ENCODE measurements at regions of chr9 and their contacts with region 1.

Region 1: GRCh38 chr9:126009047-126009446 is 261.9 kb downstream of the PBX3 start:
- DNase-seq: no peak
- H3K4me3 ChIP-seq: no peak overlapping the region
- H3K27ac ChIP-seq: no peak overlapping the region
- H3K27me3 ChIP-seq: peaks cover 0 to 8% (median 0%) of the 10 kb centered on the region in 45 donors
- CTCF ChIP-seq: no peak

Region 2: GRCh38 chr9:125988479-125989050 is 20.5 kb before region 1 on chr9:
- intact Hi-C with region 1: loop called in 1 of 2 experiments (anchors 1 kb)
- DNase-seq: peak in 4 of 10 donors; percentile 11 to 31 (median 25)
- H3K4me3 ChIP-seq: no peak overlapping the region
- H3K27ac ChIP-seq: no peak overlapping the region
- H3K27me3 ChIP-seq: no peaks in the 10 kb centered on the region
- CTCF ChIP-seq: no peak

Region 3: DNA sequence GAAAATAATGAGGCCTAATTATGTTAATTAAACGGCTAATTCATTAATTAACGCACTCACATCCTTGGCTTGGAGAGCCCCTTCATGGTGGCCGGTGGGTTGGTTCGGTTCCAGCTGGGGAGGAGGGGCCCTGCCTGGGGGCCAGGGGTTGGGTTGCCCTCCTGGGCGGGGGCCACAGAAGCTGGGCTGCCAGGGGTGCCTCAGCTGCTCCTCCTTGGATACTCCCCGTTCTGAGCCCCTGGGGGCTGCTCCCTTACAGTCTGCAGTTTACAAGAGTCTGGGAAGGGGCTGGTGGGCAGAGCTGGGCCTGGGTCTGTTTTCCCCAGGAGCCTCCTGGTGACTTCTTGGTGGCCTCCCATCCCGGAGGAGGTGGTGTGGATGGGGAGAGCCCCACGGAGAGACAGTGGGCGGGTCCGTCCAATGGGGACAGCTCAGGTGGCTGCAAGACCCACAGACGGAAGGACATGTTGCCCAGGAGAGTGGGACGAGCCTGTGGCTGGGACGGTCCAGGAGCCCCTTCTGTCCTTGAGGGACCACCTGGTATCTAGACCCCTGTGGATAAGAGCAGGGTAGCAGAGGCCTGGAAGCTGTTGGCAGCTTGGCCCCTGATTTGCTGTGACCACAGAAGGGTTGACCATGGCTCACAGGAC is 15.7 kb after region 1 on chr9:
- intact Hi-C with region 1: no loop called
- DNase-seq: no peak
- H3K4me3 ChIP-seq: no peak overlapping the region
- H3K27ac ChIP-seq: no peak overlapping the region
- H3K27me3 ChIP-seq: no peaks in the 10 kb centered on the region
- CTCF ChIP-seq: no peak

Measured in dorsolateral prefrontal cortex (tissue), 120 donors.